CD8-positive, alpha-beta T cell (primary cell): ENCODE measurements at regions of chr2 and their contacts with region 1.

Region 1: GRCh38 chr2:126678269-126679065 is 22.5 kb downstream of the GYPC start:
- DNase-seq: no peak
- ATAC-seq: no peak
- H3K4me3 ChIP-seq: no peak overlapping the region
- H3K4me3 Mint-ChIP-seq: no peak overlapping the region
- H3K27ac ChIP-seq: no peak overlapping the region
- H3K27ac Mint-ChIP-seq: peak overlapping the region; percentile 84
- H3K4me1 ChIP-seq: peaks cover 22% of the 10 kb centered on the region
- H3K4me1 Mint-ChIP-seq: peaks cover 61% of the 10 kb centered on the region
- H3K27me3 ChIP-seq: no peaks in the 10 kb centered on the region
- H3K27me3 Mint-ChIP-seq: no peaks in the 10 kb centered on the region
- CTCF ChIP-seq: no peak

Region 2: DNA sequence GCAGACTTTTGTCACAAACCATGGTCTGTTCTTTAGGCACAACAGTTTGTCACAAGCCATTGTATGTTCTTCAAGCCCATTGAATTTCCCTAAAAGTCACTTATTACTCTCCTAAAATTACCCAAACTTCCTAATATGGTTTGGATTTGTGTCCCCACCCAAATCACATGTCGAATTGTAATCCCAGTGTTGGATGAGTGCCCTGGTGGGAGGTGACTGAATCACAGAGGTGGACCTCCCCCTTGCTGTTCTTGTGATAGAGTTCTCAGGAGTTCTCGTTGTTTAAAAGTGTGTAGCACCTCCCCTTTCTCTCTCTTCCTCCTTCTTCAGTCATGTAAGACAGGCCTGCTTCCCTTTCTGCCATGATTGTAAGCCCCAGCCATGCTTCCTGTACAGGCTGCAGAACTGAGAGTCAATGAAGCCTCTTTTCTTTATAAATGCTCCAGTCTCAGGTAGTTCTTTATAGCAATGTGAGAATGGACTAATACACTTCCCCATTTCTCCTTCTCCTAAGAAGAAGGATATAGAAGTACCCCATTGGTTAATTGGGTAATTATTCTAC is 33.8 kb before region 1 on chr2:
- CTCF ChIA-PET with region 1: no interaction called
- POLR2A ChIA-PET with region 1: no interaction called
- intact Hi-C with region 1: loop called (anchors 5 kb)
- DNase-seq: peak in 1 of 9 experiments; percentile 20
- ATAC-seq: no peak
- H3K4me3 ChIP-seq: no peak overlapping the region
- H3K4me3 Mint-ChIP-seq: no peak overlapping the region
- H3K27ac ChIP-seq: no peak overlapping the region
- H3K27ac Mint-ChIP-seq: no peak overlapping the region
- H3K4me1 ChIP-seq: no peaks in the 10 kb centered on the region
- H3K4me1 Mint-ChIP-seq: peaks cover 8% of the 10 kb centered on the region
- H3K27me3 ChIP-seq: no peaks in the 10 kb centered on the region
- H3K27me3 Mint-ChIP-seq: no peaks in the 10 kb centered on the region
- CTCF ChIP-seq: no peak

Region 3: GRCh38 chr2:127106951-127107621 is 428.6 kb after region 1 on chr2 and contains the start of gene BIN1:
- CTCF ChIA-PET with region 1: no interaction called
- POLR2A ChIA-PET with region 1: no interaction called
- intact Hi-C with region 1: no loop called
- DNase-seq: peak; percentile 35 to 90 (median 69)
- ATAC-seq: peak; percentile 86
- H3K4me3 ChIP-seq: peak within 1 kb of the TSS; percentile 65 to 77
- H3K4me3 Mint-ChIP-seq: peak within 1 kb of the TSS; percentile 87
- H3K27ac ChIP-seq: peak within 1 kb of the TSS in 1 of 2 experiments; percentile 0
- H3K27ac Mint-ChIP-seq: peak within 1 kb of the TSS; percentile 12
- H3K4me1 ChIP-seq: peaks cover 6% of the 10 kb centered on the region
- H3K4me1 Mint-ChIP-seq: peaks cover 6% of the 10 kb centered on the region
- H3K27me3 ChIP-seq: peaks cover 4 to 14% of the 10 kb centered on the region in 2 experiments
- H3K27me3 Mint-ChIP-seq: peaks cover 12% of the 10 kb centered on the region
- CTCF ChIP-seq: no peak
- total RNA-seq, gene BIN1: 92.1 to 92.4 TPM